ENCODE measurements at regions of chr7 and their contacts with region 1.

Region 1: GRCh38 chr7:106176414-106177299 is 64.5 kb upstream of the SYPL1 start:
- DNase-seq: peak; percentile 75 to 91 (median 81)
- H3K4me3 ChIP-seq: no peak overlapping the region
- H3K27ac ChIP-seq: no peak overlapping the region
- H3K4me1 ChIP-seq: peaks cover 2% of the 10 kb centered on the region
- H3K27me3 ChIP-seq: no peaks in the 10 kb centered on the region
- CTCF ChIP-seq: peak; percentile 57 to 86 (median 78)
- EP300 ChIP-seq: no peak
- POLR2A ChIP-seq: no peak

Region 2: DNA sequence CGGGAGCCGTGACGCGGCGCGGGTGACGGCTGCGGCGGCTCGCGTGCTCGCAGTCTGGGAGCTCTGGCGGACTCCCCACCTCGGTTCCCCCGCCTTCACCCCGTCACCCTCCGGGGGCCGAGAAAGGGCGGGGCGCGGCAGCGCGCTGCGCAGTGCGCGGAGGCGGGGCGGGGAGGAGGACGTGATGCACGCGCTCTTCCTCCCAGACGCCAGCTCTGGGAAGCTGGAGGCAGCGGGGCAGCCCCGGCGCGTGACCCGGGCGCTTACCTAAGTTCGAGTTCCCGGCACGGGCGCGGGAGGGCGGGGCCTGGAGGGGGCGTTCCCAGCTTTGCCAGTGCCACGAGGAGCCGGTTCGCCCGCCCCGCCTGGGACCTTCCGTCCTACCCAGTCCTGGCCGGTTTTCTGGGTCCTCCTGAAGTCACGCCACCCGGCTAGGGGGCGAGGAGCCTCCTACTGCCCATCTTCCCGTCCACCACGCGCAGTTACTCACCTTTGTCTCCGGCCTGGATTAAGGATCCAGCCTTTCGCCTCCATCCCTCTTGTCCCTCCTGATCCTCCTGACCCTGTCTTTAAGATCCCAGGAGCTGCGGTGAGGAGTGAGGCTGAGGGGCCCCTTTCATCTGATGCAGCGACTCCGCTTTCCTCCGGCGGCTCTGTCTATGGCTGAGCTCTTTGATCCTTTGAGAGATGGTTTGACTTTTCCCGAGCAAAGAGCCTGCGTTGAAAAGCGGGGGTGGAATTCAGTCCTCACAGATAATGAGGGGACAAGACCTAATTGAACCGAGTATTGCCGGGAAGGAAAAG is 108.6 kb after region 1 on chr7:
- intact Hi-C with region 1: loop called in 1 of 4 experiments (anchors 10 kb)
- DNase-seq: peak; percentile 97 to 98 (median 98)
- H3K4me3 ChIP-seq: peak overlapping the region; percentile 80
- H3K27ac ChIP-seq: peak overlapping the region; percentile 97
- H3K4me1 ChIP-seq: peaks cover 3% of the 10 kb centered on the region
- H3K27me3 ChIP-seq: no peaks in the 10 kb centered on the region
- CTCF ChIP-seq: no peak
- EP300 ChIP-seq: peak; percentile 95
- POLR2A ChIP-seq: peak; percentile 55

Region 3: GRCh38 chr7:106461993-106462859 is 285.6 kb after region 1 on chr7:
- intact Hi-C with region 1: loop called (anchors 2 to 5 kb)
- DNase-seq: no peak
- H3K4me3 ChIP-seq: no peak overlapping the region
- H3K27ac ChIP-seq: no peak overlapping the region
- H3K4me1 ChIP-seq: no peaks in the 10 kb centered on the region
- H3K27me3 ChIP-seq: no peaks in the 10 kb centered on the region
- CTCF ChIP-seq: peak; percentile 30 to 72 (median 50)
- EP300 ChIP-seq: no peak
- POLR2A ChIP-seq: no peak

Region 4: DNA sequence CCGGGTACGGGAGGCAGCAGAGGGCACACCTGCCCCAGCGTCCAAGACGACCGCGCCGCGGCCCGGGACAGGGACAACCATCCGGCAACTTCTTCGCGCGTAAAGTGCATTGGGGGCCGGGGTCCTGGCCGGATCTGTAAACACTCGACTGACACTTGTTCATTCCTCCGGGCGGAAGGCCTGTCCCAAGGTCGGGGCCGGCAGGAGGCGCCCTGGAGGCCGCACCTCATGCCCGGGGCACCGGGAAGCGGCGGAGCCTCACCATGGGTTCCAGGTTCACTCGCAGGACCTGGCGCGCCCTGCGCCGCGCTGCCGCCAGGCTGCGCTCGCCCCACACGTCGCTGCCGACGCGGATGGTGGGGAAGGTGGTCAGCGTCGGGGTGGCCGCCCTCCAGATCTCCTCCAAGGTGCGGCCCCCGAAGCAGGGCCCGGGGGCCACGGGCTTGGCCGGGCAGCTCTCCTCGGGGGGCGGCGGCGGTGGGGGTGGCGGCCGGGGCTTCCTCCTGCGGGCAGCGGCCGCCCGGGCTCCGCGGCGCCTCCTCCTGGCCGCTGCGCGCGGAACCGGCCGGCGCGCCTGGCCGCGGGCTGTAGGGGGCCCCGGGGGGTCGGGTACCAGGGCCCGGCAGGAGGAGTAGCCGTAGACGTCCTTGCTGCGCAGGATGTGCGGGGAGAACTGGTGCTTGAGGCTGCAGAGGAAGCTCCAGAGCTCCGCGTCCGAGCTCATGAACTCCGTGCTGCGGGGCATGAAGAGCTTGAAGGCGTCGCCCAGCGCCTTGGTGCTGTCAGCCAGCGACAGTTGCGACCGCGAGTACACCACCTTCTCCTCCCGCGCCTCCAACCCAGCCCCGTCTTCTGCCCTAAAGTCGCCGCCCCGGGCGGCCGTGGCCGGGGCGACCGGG is 483.6 kb after region 1 on chr7:
- intact Hi-C with region 1: loop called in 1 of 4 experiments (anchors 10 kb)
- DNase-seq: peak; percentile 62 to 84 (median 69)
- H3K4me3 ChIP-seq: peak overlapping the region; percentile 82
- H3K27ac ChIP-seq: peak overlapping the region; percentile 72 to 94
- H3K4me1 ChIP-seq: peaks cover 2% of the 10 kb centered on the region
- H3K27me3 ChIP-seq: no peaks in the 10 kb centered on the region
- CTCF ChIP-seq: peak; percentile 36 to 45 (median 38)
- EP300 ChIP-seq: no peak
- POLR2A ChIP-seq: no peak